Activated CD4-positive, alpha-beta memory T cell treated with anti-CD3 and anti-CD28 coated beads, Interleukin-2, amount 10 ng/mL, durations not matched to agents 7 days and 5 days (primary cell): ENCODE measurements at regions of chr6 and their contacts with region 1.

Region 1: GRCh38 chr6:119147101-119148053 is 68.9 kb upstream of the FAM184A start:
- DNase-seq: peak; percentile 62
- H3K4me3 Mint-ChIP-seq: no peak overlapping the region
- H3K27ac Mint-ChIP-seq: peak overlapping the region; percentile 63
- H3K4me1 Mint-ChIP-seq: peaks cover 55% of the 10 kb centered on the region
- H3K27me3 Mint-ChIP-seq: peaks cover 4% of the 10 kb centered on the region

Region 2: DNA sequence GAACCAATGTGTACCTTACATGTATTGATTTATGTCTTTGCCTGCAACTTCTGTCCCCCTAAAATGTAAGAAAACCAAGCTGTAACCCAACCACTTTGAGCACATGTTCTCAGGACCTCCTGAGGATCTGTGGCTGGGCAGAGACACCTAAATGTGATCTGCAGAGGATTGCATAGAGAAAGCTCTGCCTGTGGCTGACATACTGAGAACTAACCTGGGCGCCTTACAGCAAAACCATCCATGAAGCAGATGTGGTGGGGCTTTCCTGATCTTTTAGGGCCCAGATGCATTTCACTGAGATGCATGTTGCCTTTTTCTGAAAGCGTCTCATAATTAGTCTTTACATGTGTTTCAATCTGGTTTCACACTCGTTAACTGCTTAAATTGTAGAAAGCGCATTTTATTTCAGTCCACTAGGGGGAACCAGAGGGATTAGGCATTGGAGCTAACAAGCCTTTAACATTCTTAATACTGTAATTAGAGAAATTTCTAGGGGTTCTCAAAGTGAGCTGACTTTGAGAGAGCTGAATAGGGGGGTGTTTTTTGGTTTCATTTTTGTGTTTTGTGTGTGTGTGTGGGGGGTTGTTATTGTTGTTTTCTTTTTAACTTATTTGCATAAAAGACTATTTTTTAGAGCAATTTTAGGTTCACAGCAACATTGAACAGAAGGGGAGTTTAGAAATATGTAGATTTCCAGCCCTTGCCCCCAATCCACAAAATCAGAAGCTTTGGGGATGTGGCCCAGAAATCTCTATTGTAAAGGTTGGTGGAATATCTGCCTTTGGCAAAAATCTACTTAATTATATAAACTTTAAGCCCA is 18.0 kb before region 1 on chr6:
- CTCF ChIA-PET with region 1: interaction called, 49 read pairs
- POLR2A ChIA-PET with region 1: no interaction called
- DNase-seq: no peak
- H3K4me3 Mint-ChIP-seq: no peak overlapping the region
- H3K27ac Mint-ChIP-seq: no peak overlapping the region
- H3K4me1 Mint-ChIP-seq: peaks cover 5% of the 10 kb centered on the region
- H3K27me3 Mint-ChIP-seq: peaks cover 2% of the 10 kb centered on the region

Region 3: GRCh38 chr6:119848696-119849095 is 701.3 kb after region 1 on chr6:
- CTCF ChIA-PET with region 1: no interaction called
- POLR2A ChIA-PET with region 1: no interaction called
- DNase-seq: no peak
- H3K4me3 Mint-ChIP-seq: no peak overlapping the region
- H3K27ac Mint-ChIP-seq: no peak overlapping the region
- H3K4me1 Mint-ChIP-seq: no peaks in the 10 kb centered on the region
- H3K27me3 Mint-ChIP-seq: no peaks in the 10 kb centered on the region

Region 4: GRCh38 chr6:120116343-120116742 is 969.0 kb after region 1 on chr6:
- CTCF ChIA-PET with region 1: no interaction called
- POLR2A ChIA-PET with region 1: no interaction called
- DNase-seq: no peak
- H3K4me3 Mint-ChIP-seq: no peak overlapping the region
- H3K27ac Mint-ChIP-seq: no peak overlapping the region
- H3K4me1 Mint-ChIP-seq: no peaks in the 10 kb centered on the region
- H3K27me3 Mint-ChIP-seq: no peaks in the 10 kb centered on the region